HepG2 (cell line): ENCODE measurements at regions of chr20 and their contacts with region 1.

Region 1: DNA sequence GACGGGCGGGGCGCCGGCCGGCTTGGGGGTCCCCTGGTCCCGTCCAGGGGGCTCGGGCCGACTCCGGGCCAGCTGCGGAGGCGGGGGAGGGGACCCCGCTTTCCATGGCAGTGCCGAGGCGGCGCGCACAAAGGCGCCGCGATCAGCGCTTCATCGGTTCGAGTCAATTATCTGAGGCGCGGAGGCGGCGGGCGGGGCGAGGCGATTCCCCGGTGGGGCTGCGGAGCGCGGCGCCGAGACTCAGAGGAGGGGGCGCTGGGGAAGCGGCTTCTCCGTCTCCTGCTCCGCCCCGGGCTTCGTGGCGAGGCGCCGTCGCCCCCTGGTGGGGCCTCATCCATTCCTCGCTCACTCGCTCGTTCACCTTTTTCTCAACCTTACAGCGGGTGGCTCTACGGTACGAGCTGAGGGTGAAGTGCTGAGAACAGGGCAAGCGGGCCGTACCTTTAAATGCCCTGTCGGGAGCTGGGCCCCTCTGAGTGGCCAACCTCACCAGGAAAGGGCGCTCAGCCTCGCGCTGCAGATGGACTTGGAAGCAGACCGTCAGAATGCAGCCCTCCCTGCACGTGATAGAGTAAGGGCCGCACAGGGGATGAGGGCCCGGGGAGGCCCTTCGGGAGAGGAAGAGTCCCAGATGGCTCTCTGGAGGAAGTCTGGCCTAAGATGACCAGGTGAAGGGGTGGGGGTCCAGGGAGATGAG is 39.9 kb downstream of the SLC52A3 start:
- DNase-seq: peak; percentile 51
- ATAC-seq: peak; percentile 95
- H3K4me3 ChIP-seq: peak overlapping the region; percentile 58 to 74 (median 61)
- H3K27ac ChIP-seq: no peak overlapping the region
- H3K4me1 ChIP-seq: peaks cover 6% of the 10 kb centered on the region; the same call in 1 of the 2 replicates
- H3K27me3 ChIP-seq: peaks cover 12 to 60% of the 10 kb centered on the region in 2 experiments
- CTCF ChIP-seq: peak; percentile 97
- EP300 ChIP-seq: no peak
- POLR2A ChIP-seq: no peak
- RAD21 ChIP-seq: peak; percentile 96

Region 2: DNA sequence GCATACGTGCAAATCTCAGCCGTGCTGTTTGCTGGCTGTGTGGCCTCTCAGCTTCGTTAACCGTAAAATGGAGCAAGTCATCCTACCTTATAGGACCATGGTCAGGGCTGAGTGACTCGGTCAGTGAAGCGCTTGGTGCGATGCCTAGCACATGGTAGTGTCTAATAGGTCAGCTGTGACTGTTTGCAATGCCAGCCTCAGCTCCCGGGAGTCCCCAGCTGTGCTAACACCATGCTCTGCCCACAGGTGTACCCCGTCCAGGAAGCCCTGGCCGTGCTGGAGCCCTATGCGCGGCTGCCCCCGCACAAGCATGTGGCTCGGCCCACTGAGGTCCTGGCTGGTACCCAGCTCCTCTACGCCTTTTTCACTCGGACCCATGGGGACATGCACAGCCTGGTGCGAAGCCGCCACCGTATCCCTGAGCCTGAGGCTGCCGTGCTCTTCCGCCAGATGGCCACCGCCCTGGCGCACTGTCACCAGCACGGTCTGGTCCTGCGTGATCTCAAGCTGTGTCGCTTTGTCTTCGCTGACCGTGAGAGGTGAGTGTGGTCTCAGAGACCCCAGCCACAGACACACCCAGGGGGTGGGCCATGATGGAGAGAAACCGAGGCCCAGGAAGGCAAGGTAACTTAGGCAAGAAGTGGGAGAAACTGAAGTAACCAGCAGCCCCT is 337.2 kb before region 1 on chr20:
- CTCF ChIA-PET with region 1: no interaction called
- POLR2A ChIA-PET with region 1: no interaction called
- in situ Hi-C with region 1: no loop called
- intact Hi-C with region 1: no loop called
- DNase-seq: no peak
- ATAC-seq: peak; percentile 25
- H3K4me3 ChIP-seq: no peak overlapping the region
- H3K27ac ChIP-seq: no peak overlapping the region
- H3K4me1 ChIP-seq: peaks cover 68% of the 10 kb centered on the region
- H3K27me3 ChIP-seq: no peaks in the 10 kb centered on the region
- CTCF ChIP-seq: no peak
- EP300 ChIP-seq: no peak
- POLR2A ChIP-seq: peak in 1 of 2 experiments; percentile 43; a peak in 1 of 4 replicates
- RAD21 ChIP-seq: peak; percentile 36

Region 3: GRCh38 chr20:645318-646106 is 82.9 kb before region 1 on chr20:
- CTCF ChIA-PET with region 1: no interaction called
- POLR2A ChIA-PET with region 1: no interaction called
- in situ Hi-C with region 1: no loop called
- intact Hi-C with region 1: loop called (anchors 2 kb)
- DNase-seq: peak; percentile 90
- ATAC-seq: peak; percentile 78
- H3K4me3 ChIP-seq: peak overlapping the region; percentile 15 to 71 (median 58)
- H3K27ac ChIP-seq: peak overlapping the region; percentile 86
- H3K4me1 ChIP-seq: peaks cover 49% of the 10 kb centered on the region
- H3K27me3 ChIP-seq: no peaks in the 10 kb centered on the region
- CTCF ChIP-seq: peak; percentile 100
- EP300 ChIP-seq: peak; percentile 32 to 53; a peak in 2 of 4 replicates
- POLR2A ChIP-seq: peak; percentile 43 to 53; a peak in 2 of 4 replicates
- RAD21 ChIP-seq: peak; percentile 99

Region 4: DNA sequence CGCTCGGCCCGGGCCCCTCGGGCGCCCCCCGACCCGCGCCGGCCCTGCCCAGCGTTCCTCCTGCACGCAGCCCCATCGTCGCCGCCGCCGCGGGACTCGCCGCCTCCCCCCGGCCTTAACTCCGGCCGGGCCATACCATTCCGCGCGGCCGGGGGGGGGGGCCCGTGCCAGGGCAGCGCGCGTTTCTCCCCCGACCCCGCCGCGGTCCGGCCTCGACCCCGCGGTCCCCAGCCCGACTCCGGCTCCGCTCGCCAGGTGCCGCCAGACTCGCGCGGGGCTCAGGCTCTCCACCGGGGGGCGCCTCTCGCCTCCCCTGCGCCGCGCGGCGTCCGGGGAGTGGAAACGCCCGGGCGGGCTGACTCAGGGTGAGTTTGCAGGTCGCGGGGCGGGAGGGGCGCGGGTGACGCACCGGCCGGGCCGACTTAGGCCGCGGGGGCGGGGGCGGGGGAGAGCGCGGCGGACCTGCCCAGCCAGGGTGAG is 75.2 kb before region 1 on chr20 and contains the start of gene SRXN1:
- CTCF ChIA-PET with region 1: interaction called, 13 read pairs
- POLR2A ChIA-PET with region 1: no interaction called
- in situ Hi-C with region 1: no loop called
- intact Hi-C with region 1: no loop called
- DNase-seq: peak; percentile 92
- ATAC-seq: peak; percentile 87
- H3K4me3 ChIP-seq: peak within 1 kb of the TSS; percentile 67 to 96 (median 93)
- H3K27ac ChIP-seq: peak within 1 kb of the TSS; percentile 75
- H3K4me1 ChIP-seq: peaks cover 37% of the 10 kb centered on the region
- H3K27me3 ChIP-seq: peaks cover 4 to 30% of the 10 kb centered on the region in 2 experiments; a peak in 2 of 5 replicates
- CTCF ChIP-seq: peak; percentile 91
- EP300 ChIP-seq: peak; percentile 14 to 74; a peak in 3 of 4 replicates
- POLR2A ChIP-seq: peak in 1 of 2 experiments; percentile 62; a peak in 1 of 4 replicates
- RAD21 ChIP-seq: peak; percentile 97
- total RNA-seq, gene SRXN1: 87.7 and 98.2 TPM in 2 replicates